A549 (cell line): ENCODE measurements at regions of chr2 and their contacts with region 1.

Region 1: DNA sequence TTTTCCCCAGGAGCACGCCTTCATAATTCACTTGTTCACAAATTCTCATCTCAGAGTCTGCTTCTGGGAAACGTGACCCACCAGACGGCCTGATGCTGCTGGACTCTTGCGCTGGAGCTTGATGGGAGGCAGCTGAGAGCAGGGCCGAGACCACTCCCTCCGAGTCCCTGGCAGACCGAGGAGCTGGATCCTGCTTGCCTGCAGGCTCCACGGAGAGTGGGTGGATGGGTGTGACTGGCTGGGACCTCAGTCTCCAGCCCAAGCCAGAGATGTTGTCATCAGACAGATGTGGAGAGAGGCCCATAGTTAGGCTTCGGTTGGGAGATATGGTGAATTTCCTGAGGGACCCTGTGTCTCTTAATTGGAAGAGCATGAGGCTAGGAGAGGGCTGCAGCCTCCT is 76.4 kb downstream of the TSN start:
- DNase-seq: no peak
- ATAC-seq: no peak
- H3K4me3 ChIP-seq: no peak overlapping the region
- H3K27ac ChIP-seq: no peak overlapping the region
- H3K4me1 ChIP-seq: no peaks in the 10 kb centered on the region
- CTCF ChIP-seq: no peak
- EP300 ChIP-seq: no peak
- POLR2A ChIP-seq: no peak
- RAD21 ChIP-seq: no peak

Region 2: DNA sequence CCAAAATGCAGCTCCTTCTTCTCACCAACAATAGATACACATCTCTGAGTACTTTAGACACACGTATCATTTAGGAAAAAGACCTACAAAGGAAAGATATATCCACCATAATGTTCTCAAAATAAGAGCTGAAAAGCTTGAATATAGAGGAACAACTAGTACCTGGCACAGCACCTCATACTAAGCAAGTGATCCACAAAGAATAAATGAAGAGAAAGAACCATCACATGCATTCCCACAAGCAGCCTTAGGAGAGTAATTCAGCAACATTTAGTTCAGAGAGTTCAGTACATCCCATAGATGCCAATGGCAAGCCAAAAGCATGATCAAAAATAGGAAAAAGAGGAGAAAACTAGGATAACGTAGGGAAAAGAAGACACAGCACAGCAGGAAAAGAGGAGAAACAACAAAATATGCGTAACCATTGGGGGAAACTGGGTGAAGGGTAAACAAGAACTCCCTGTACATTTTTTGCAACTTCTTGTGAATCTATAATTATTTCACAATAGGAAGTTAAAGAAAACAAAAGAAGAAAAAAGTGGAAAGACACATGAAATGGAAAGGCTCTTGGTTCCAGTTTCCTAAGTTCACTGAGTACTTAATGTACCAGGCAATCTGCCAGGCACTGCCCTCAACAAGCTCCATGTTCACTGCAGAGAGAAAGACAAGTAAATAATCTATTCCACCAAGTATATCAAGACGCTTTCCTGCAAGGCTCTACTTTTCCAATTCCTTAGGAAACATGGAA is 204.9 kb before region 1 on chr2:
- CTCF ChIA-PET with region 1: no interaction called
- POLR2A ChIA-PET with region 1: no interaction called
- DNase-seq: no peak
- ATAC-seq: no peak
- H3K4me3 ChIP-seq: no peak overlapping the region
- H3K27ac ChIP-seq: peak overlapping the region in 1 of 2 experiments; percentile 56; a peak in 1 of 6 replicates
- H3K4me1 ChIP-seq: peaks cover 6% of the 10 kb centered on the region; the same call in 1 of the 3 replicates
- CTCF ChIP-seq: no peak
- EP300 ChIP-seq: no peak
- POLR2A ChIP-seq: no peak
- RAD21 ChIP-seq: no peak

Region 3: GRCh38 chr2:121638333-121638732 is 193.5 kb before region 1 on chr2:
- CTCF ChIA-PET with region 1: no interaction called
- POLR2A ChIA-PET with region 1: no interaction called
- DNase-seq: no peak
- ATAC-seq: no peak
- H3K4me3 ChIP-seq: no peak overlapping the region
- H3K27ac ChIP-seq: no peak overlapping the region
- H3K4me1 ChIP-seq: peaks cover 29% of the 10 kb centered on the region
- CTCF ChIP-seq: no peak
- EP300 ChIP-seq: no peak
- POLR2A ChIP-seq: no peak
- RAD21 ChIP-seq: no peak

Region 4: GRCh38 chr2:121649596-121650314 is 182.1 kb before region 1 on chr2:
- CTCF ChIA-PET with region 1: no interaction called
- POLR2A ChIA-PET with region 1: no interaction called
- DNase-seq: peak; percentile 96 to 98
- ATAC-seq: peak; percentile 96 to 98
- H3K4me3 ChIP-seq: peak overlapping the region; percentile 73
- H3K27ac ChIP-seq: peak overlapping the region; percentile 91 to 93
- H3K4me1 ChIP-seq: peaks cover 20% of the 10 kb centered on the region
- CTCF ChIP-seq: no peak
- EP300 ChIP-seq: no peak
- POLR2A ChIP-seq: peak; percentile 32
- RAD21 ChIP-seq: no peak

Region 5: DNA sequence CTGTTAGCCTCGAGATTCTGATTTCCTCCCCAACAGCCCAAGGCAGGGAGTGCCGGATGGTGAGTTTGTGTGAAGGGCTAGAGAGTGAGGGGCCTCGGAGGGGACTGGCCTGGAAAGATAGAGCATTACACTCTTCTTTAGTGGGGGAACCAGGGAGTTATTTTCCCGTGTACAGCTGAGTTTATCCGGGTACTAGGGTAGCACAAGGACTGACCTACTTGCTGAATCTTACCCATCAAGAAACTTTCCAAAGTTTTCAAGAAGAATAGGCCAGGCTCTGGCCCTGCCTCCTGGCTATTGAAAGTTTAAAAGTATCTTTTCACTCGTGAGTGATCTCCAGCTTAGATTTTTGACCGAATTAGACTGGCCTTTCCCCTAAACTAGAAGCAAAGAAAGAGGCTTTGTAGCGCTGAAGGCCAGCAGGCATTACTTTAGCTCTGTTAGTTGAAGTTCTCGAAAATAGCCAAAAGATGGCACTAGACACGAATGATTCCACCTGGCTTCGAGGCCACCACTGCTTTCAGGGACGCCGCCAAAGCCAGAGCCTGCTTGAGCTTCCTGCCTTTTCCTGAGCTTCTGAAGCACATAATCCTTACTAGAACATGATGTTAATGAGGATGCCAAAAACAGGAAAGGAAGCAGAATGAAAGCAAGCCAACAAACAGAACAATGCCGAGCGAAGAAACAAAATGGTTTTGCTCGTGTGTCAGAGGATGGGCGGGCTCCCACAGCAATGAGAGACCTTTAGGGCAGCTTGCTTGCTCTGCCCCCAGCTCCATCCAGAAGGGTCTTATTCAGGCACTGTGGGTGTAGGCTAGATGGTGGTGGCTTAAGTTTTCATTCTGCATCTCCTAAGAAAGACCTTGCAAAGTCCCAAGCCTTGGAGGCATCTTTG is 20.6 kb before region 1 on chr2:
- CTCF ChIA-PET with region 1: interaction called, 14 read pairs
- POLR2A ChIA-PET with region 1: no interaction called
- DNase-seq: peak; percentile 41 to 53
- ATAC-seq: peak; percentile 94 to 96
- H3K4me3 ChIP-seq: no peak overlapping the region
- H3K27ac ChIP-seq: no peak overlapping the region
- H3K4me1 ChIP-seq: no peaks in the 10 kb centered on the region
- CTCF ChIP-seq: peak; percentile 63
- EP300 ChIP-seq: no peak
- POLR2A ChIP-seq: no peak
- RAD21 ChIP-seq: peak; percentile 78 to 79

Region 6: DNA sequence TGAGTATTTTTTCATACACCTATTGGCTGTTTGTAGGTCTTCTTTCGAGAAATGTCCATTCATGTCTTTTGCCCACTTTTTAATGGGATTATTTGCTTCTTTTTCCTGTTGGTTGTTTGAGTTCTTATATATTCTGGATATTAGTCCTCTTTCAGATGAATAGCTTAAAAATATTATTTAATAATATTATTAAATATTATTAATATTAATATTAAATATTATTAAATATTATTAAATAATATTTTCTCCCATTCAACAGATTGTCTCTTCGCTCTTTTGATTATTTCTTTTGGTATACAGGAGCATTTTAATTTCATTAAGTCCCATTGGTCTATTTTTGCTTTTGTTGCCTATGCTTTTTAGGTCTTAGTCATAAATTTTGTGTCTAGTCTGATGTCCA is 285.5 kb after region 1 on chr2:
- CTCF ChIA-PET with region 1: no interaction called
- POLR2A ChIA-PET with region 1: no interaction called
- DNase-seq: no peak
- ATAC-seq: no peak
- H3K4me3 ChIP-seq: no peak overlapping the region
- H3K27ac ChIP-seq: no peak overlapping the region
- H3K4me1 ChIP-seq: no peaks in the 10 kb centered on the region
- CTCF ChIP-seq: no peak
- EP300 ChIP-seq: no peak
- POLR2A ChIP-seq: no peak
- RAD21 ChIP-seq: no peak